ENCODE measurements at regions of chr9 and their contacts with region 1.

Region 1: DNA sequence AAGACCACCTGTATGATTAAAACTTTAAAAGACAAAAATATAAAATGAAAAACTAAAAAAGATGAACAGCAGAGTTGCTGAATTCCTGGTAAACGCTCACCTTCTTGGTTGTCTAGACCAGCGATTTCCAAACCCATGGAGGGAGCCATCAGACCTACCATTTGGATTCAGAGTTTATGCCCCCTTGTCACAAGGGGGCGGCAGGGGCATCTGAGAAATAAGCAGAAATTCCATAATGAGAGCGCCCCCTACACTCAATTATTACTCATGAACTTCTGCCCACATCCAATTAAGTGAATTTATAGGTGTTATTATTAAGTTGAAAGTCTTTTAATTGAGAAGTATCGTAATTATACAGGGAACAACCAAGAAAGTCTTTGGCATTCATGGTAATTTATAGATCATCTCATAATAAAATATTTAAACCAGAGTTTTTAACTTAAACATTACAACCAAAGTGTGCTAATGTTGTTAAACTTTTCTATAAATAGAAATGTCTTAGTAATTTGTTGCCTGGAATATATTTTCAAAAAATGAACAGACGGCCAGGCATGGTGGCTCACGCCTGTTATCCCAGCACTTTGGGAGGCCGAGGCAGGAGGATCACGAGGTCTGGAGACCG is 35.2 kb upstream of the SPATA31C2 start:
- DNase-seq: peak; percentile 58
- H3K4me3 Mint-ChIP-seq: no peak overlapping the region
- H3K27ac Mint-ChIP-seq: no peak overlapping the region
- H3K4me1 Mint-ChIP-seq: peaks cover under 1% of the 10 kb centered on the region
- H3K27me3 Mint-ChIP-seq: peaks cover 11% of the 10 kb centered on the region

Region 2: GRCh38 chr9:88143180-88143579 is 30.3 kb before region 1 on chr9:
- CTCF ChIA-PET with region 1: no interaction called
- POLR2A ChIA-PET with region 1: no interaction called
- intact Hi-C with region 1: no loop called
- DNase-seq: no peak
- H3K4me3 Mint-ChIP-seq: no peak overlapping the region
- H3K27ac Mint-ChIP-seq: no peak overlapping the region
- H3K4me1 Mint-ChIP-seq: peaks cover 2% of the 10 kb centered on the region
- H3K27me3 Mint-ChIP-seq: peaks cover 30% of the 10 kb centered on the region

Region 3: GRCh38 chr9:88578121-88579054 is 404.9 kb after region 1 on chr9:
- CTCF ChIA-PET with region 1: interaction called, 3 read pairs
- POLR2A ChIA-PET with region 1: no interaction called
- intact Hi-C with region 1: loop called (anchors 1 kb)
- DNase-seq: peak; percentile 76
- H3K4me3 Mint-ChIP-seq: peak overlapping the region; percentile 30
- H3K27ac Mint-ChIP-seq: no peak overlapping the region
- H3K4me1 Mint-ChIP-seq: peaks cover 3% of the 10 kb centered on the region
- H3K27me3 Mint-ChIP-seq: peaks cover 18% of the 10 kb centered on the region

Measured in activated CD4-positive, alpha-beta memory T cell treated with anti-CD3 and anti-CD28 coated beads for 36 hours (primary cell).